ENCODE measurements at regions of chr18 and their contacts with region 1.

Region 1: DNA sequence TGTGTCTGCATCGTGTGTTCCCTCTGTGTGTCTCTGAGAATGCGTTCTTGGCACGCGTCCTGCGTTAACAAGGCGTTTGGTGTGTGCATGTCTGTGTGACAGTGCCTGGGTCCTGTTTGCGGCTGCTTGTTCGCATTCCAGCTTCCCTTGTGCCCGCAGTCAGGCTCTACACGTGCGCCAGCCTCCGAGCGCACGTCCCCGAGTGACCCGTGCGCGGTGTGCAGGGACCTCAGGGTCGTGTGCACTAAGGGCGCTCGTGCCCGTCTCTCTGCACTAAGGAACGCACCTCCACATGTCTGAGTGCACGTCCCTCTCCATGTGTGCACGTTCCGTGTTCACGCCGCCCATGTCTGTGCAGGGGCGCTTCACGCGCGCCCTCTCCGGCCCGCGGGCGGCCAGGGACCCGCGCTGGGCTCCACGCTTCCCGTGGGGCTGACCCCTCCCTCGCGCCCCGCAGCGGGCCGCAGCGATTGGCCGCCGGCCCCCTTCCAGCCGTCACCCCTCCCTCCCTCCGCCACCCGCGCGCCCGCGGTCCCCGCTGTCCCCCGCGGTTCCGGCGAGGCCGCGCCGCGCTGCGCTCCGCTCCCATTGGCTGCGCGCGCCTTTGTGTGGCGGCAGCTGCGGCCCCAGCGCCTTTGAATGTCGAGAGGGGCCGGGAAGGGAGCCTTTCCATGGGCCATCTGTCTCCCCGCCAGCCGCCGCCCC is 229.4 kb downstream of the HAUS1 start:
- DNase-seq: no peak
- ATAC-seq: peak; percentile 78

Region 2: GRCh38 chr18:46291149-46291548 is 42.4 kb before region 1 on chr18:
- intact Hi-C with region 1: no loop called
- DNase-seq: no peak
- ATAC-seq: no peak

Region 3: DNA sequence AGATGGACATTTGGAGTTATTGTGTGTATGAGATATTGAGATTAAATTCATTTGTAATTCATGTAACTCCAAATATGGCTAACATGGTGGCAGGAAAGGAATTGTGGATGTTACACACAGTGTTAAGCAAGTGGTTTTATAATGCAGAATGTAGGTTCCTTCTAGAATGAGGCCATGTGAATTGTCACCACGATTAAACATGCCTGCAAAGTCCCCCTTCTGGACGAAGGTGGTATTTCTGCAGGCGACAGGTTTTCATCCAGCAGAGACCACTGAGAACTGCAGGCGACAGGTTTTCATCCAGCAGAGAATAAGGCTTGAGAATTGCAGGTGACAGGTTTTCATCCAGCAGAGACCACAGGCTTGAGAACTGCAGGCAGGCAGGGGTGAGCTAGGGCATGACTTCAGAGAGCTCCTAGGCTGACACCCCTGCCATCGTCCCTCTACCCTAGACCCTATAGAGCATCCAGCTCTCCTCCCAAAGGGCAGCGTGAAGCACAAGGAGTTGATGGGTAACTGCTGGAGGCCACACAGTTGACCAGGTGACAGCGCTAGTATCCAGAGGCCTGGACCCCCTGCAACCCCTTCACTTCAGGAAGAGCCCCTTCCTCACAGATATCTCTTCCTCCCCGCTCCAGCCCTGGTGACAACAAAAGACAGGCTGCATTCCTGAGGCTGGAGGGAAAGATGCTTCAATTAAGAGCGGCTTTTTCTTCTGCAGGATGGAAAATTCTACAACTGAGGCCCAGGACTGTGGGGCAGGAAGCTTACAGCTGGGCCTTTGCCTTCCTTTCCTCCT is 147.7 kb after region 1 on chr18:
- intact Hi-C with region 1: loop called (anchors 5 kb)
- DNase-seq: no peak
- ATAC-seq: no peak

Region 4: DNA sequence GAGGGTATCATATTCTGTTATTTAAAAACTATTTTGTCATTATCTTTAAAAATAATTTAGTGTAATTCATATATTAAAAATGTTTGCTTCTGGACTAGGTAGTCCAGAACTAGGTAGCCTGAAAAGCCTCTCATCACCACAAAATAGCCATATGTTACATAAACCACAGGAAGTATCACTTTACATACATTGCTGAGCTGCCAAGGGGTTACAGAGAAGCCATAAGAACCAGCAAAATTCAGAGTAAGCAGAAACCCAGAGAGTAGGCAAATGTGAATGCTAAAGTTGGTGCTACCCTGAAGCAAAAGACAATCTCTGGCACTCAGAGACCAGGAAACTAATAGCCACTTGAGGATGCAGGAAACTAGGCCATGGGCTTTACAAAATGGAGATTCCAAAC is 262.5 kb after region 1 on chr18:
- intact Hi-C with region 1: no loop called
- DNase-seq: no peak
- ATAC-seq: no peak

Measured in Right ventricle myocardium inferior (tissue), 1 donor.